PC-9 (cell line): ENCODE measurements at regions of chr16 and their contacts with region 1.

Region 1: GRCh38 chr16:53435066-53435688 is 906 bp downstream of the RBL2 start:
- DNase-seq: peak; percentile 61 to 92
- H3K4me3 ChIP-seq: peak overlapping the region; percentile 96
- H3K27ac ChIP-seq: peak overlapping the region; percentile 48
- H3K4me1 ChIP-seq: peaks cover 28% of the 10 kb centered on the region
- H3K27me3 ChIP-seq: no peaks in the 10 kb centered on the region
- CTCF ChIP-seq: no peak

Region 2: DNA sequence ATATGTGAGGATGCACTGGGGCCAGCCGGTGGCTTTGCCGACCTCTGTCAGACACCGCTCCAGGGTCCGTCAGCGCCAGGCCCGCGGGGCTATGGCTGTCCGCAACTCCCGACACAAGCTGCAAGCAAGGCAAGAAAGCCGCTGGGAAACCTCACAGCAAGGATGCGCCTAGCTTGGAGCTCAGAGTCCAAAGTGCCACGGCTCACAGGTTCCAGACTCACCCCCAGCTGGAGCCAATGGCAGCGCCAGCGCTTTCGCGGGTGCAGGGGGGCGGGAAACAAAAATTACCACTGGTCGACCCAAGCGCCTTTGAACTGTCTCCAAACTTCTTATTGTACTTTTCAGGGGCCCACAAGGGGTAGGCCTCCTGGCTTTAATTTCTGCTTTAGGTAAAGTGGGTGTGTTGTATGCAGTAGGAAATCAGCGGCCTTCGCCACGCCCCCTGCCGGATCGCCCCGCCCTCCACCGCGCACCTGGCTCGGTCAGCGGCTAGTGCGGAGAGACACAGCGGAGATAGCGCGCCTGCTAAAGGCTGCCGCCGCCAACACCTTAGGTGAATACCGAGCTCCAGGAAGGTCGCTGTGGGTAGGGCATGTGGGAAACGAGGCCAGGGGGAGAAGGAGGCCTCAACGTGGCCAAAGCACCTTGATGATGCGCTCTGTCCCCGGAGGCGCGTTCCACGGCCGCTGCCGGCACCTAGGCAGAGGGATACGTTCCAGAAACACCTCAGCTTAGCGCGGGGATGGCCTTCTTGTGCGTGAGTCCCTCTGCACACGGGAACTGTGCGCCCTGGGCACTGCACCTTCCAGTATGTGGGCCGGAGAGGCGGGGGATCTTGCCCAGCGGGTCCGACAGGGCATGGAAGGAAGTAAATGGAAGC is 61.9 kb before region 1 on chr16:
- CTCF ChIA-PET with region 1: no interaction called
- POLR2A ChIA-PET with region 1: interaction called, 3 read pairs
- intact Hi-C with region 1: loop called (anchors 1 kb)
- DNase-seq: peak; percentile 67 to 88
- H3K4me3 ChIP-seq: peak overlapping the region; percentile 69
- H3K27ac ChIP-seq: peak overlapping the region; percentile 29; the same call in 1 of the 2 replicates
- H3K4me1 ChIP-seq: peaks cover 24% of the 10 kb centered on the region
- H3K27me3 ChIP-seq: 0 out of 2 replicates have a peak, but pooled peaks cover 8% of the 10 kb centered on the region
- CTCF ChIP-seq: no peak

Region 3: DNA sequence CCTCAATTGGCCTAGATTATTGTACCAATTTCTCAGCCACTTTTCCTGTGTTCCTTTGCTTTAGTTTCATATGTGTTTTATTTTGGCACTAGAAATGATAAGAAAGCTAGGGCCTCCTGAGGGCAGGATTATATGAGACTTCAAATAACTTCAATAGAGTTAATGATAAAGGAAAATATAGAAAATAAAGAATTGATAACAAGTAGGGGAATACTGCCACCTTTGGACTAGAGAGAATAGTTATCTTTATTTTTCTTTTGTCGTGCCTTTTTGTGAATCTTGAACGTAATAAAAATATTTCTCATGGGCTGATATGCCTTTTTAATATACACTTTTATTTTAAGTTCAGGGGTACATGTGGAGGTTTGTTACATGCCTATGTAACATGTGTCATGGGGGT is 30.2 kb before region 1 on chr16:
- CTCF ChIA-PET with region 1: no interaction called
- POLR2A ChIA-PET with region 1: no interaction called
- intact Hi-C with region 1: no loop called
- DNase-seq: no peak
- H3K4me3 ChIP-seq: no peak overlapping the region
- H3K27ac ChIP-seq: no peak overlapping the region
- H3K4me1 ChIP-seq: no peaks in the 10 kb centered on the region
- H3K27me3 ChIP-seq: no peaks in the 10 kb centered on the region
- CTCF ChIP-seq: peak; percentile 59